Transverse colon (tissue), 4 donors: ENCODE measurements at regions of chr11 and their contacts with region 1.

Region 1: GRCh38 chr11:92296138-92296515 is 71.5 kb downstream of the FAT3 start:
- DNase-seq: no peak
- H3K4me3 ChIP-seq: no peak overlapping the region
- H3K27ac ChIP-seq: peak overlapping the region in 1 of 4 donors; percentile 22
- H3K4me1 ChIP-seq: peaks cover 0 to 15% (median 5%) of the 10 kb centered on the region in 4 donors
- H3K27me3 ChIP-seq: no peaks in the 10 kb centered on the region
- CTCF ChIP-seq: no peak
- EP300 ChIP-seq: no peak
- POLR2A ChIP-seq: no peak

Region 2: DNA sequence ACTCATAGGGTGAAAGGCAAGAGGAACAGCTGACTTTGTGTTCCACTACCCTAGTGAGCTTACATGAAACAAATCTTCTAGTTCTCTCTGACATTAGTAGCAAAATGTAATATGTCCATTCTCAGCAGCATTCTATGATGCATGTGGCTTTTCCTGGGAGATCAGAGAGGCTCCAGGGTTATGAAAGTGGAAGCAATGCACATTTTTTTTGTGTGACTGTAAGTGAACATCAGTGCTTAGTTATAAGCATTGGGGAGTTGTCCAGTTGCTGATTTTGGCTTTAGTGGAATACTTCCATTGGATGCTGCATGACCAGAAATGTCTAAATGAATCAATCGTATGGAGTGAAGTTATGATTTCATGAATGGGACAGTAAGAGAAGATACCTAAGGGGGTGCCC is 184.4 kb after region 1 on chr11:
- in situ Hi-C with region 1: no loop called
- intact Hi-C with region 1: loop called (anchors 5 kb)
- DNase-seq: no peak
- H3K4me3 ChIP-seq: no peak overlapping the region
- H3K27ac ChIP-seq: no peak overlapping the region
- H3K4me1 ChIP-seq: no peaks in the 10 kb centered on the region
- H3K27me3 ChIP-seq: no peaks in the 10 kb centered on the region
- CTCF ChIP-seq: no peak
- EP300 ChIP-seq: no peak
- POLR2A ChIP-seq: no peak

Region 3: DNA sequence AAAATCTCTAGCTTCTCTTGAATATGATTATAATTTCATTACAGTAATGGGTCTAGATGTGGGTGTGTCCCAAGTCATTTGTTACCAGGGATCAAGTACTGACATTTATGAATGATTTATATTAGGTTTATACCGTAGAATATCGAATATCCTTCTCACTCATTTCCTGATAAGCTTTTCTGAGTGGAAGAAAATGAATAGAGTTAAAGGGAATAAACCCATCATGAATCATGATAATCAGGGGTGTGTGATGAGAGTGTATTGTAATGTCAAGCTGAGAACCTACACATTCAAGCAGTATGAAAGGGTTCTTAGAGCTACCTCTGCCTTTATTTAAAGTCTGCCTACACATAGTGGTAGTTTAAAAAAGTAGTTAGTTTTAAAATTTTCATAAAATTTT is 1505.2 kb after region 1 on chr11:
- in situ Hi-C with region 1: no loop called
- intact Hi-C with region 1: no loop called
- DNase-seq: no peak
- H3K4me3 ChIP-seq: no peak overlapping the region
- H3K27ac ChIP-seq: no peak overlapping the region
- H3K4me1 ChIP-seq: no peaks in the 10 kb centered on the region
- H3K27me3 ChIP-seq: no peaks in the 10 kb centered on the region
- CTCF ChIP-seq: no peak
- EP300 ChIP-seq: no peak
- POLR2A ChIP-seq: no peak